Ascending aorta (tissue), 2 donors: ENCODE measurements at regions of chr14 and their contacts with region 1.

Region 1: DNA sequence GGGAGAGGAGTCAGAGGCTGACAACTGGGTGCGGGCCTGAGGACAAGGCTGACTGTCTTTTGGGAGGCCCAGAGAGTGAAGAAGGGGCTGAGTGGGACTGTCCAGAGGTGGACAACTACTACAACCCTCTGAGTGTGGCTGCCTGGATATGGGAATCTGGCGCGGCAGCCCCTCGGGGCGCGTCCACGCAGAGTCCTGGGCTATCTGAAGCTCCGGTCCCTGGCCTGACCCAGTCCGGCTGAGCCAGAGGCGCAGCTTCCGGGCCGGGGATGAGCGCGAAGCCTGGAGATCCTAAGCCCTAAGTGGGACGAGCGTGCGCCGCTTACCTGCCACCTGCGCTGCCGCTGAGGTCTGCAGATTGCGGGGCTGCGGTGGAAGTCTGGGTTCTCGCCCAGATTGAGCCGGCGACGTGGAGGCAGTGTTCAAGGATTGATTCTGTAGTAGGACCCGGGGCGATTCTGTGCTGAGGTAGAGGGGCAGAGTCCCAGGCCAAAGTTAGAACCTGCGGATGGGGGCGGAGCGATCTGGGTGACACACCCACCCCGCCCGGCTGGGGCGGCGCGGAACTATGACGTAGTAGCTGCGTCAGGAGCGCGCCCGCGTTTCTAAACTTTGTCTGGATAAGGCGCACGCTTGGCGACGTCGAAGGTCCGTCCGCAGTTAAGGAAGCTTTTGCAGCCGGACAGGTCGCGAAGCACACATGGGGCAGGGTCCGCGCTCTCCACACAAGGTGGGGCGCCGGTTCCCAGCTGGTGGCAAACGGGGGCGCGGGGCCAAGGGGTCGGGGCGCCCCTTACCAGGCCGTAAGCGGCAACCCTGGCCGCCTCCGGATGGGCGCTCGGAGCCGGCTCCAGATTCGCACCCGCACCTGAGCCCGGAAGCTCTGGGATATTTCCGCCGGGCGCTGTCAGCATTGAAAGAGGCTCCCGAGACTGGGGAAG is at the starts of genes DHRS1 and NOP9:
- DNase-seq: peak; percentile 48 to 96
- H3K4me3 ChIP-seq: peak within 1 kb of the TSS; percentile 51 to 84
- H3K27ac ChIP-seq: peak within 1 kb of the TSS; percentile 64 to 67
- H3K4me1 ChIP-seq: peaks cover 3 to 12% of the 10 kb centered on the region in 2 donors
- H3K27me3 ChIP-seq: no peaks in the 10 kb centered on the region
- CTCF ChIP-seq: no peak
- total RNA-seq, gene DHRS1: 100 TPM
- total RNA-seq, gene NOP9: 33.5 TPM

Region 2: GRCh38 chr14:24013654-24014514 is 285.6 kb before region 1 on chr14:
- intact Hi-C with region 1: no loop called
- DNase-seq: no peak
- H3K4me3 ChIP-seq: no peak overlapping the region
- H3K27ac ChIP-seq: no peak overlapping the region
- H3K4me1 ChIP-seq: peaks cover 0 to 4% of the 10 kb centered on the region in 2 donors
- H3K27me3 ChIP-seq: no peaks in the 10 kb centered on the region
- CTCF ChIP-seq: peak; percentile 74 to 93 (median 82)

Region 3: GRCh38 chr14:24215495-24216344 is 83.8 kb before region 1 on chr14 and contains the start of gene MDP1:
- intact Hi-C with region 1: loop called (anchors 5 kb)
- DNase-seq: peak; percentile 53 to 92
- H3K4me3 ChIP-seq: peak within 1 kb of the TSS; percentile 84 to 88
- H3K27ac ChIP-seq: peak within 1 kb of the TSS; percentile 87 to 93
- H3K4me1 ChIP-seq: peaks cover 3 to 29% of the 10 kb centered on the region in 2 donors
- H3K27me3 ChIP-seq: no peaks in the 10 kb centered on the region
- CTCF ChIP-seq: peak in 2 of 3 experiments; percentile 44 to 60
- total RNA-seq, gene MDP1: 58.8 TPM

Region 4: GRCh38 chr14:24271134-24271833 is 28.2 kb before region 1 on chr14 and contains the start of gene RABGGTA:
- intact Hi-C with region 1: loop called (anchors 2 kb)
- DNase-seq: peak; percentile 50 to 89
- H3K4me3 ChIP-seq: peak within 1 kb of the TSS; percentile 74 to 91
- H3K27ac ChIP-seq: peak within 1 kb of the TSS; percentile 92 to 96
- H3K4me1 ChIP-seq: peaks cover 0 to 8% of the 10 kb centered on the region in 2 donors
- H3K27me3 ChIP-seq: no peaks in the 10 kb centered on the region
- CTCF ChIP-seq: peak; percentile 66 to 80 (median 72)
- total RNA-seq, gene RABGGTA: 54.9 TPM

Region 5: DNA sequence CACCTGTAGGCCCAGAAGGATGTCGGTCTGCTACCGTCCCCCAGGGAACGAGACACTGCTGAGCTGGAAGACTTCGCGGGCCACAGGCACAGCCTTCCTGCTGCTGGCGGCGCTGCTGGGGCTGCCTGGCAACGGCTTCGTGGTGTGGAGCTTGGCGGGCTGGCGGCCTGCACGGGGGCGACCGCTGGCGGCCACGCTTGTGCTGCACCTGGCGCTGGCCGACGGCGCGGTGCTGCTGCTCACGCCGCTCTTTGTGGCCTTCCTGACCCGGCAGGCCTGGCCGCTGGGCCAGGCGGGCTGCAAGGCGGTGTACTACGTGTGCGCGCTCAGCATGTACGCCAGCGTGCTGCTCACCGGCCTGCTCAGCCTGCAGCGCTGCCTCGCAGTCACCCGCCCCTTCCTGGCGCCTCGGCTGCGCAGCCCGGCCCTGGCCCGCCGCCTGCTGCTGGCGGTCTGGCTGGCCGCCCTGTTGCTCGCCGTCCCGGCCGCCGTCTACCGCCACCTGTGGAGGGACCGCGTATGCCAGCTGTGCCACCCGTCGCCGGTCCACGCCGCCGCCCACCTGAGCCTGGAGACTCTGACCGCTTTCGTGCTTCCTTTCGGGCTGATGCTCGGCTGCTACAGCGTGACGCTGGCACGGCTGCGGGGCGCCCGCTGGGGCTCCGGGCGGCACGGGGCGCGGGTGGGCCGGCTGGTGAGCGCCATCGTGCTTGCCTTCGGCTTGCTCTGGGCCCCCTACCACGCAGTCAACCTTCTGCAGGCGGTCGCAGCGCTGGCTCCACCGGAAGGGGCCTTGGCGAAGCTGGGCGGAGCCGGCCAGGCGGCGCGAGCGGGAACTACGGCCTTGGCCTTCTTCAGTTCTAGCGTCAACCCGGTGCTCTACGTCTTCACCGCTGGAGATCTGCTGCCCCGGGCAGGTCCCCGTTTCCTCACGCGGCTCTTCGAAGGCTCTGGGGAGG is 11.4 kb after region 1 on chr14 and contains the start of gene LTB4R:
- intact Hi-C with region 1: loop called (anchors 1 kb)
- DNase-seq: peak in 1 of 2 donors; percentile 81
- H3K4me3 ChIP-seq: peak within 1 kb of the TSS; percentile 61 to 68
- H3K27ac ChIP-seq: peak within 1 kb of the TSS; percentile 65 to 68
- H3K4me1 ChIP-seq: peaks cover 8 to 14% of the 10 kb centered on the region in 2 donors
- H3K27me3 ChIP-seq: no peaks in the 10 kb centered on the region
- CTCF ChIP-seq: peak in 2 of 3 experiments; percentile 21 to 52
- total RNA-seq, gene LTB4R: 3.6 TPM